Right cardiac atrium (tissue), 5 donors: ENCODE measurements at regions of chr7 and their contacts with region 1.

Region 1: GRCh38 chr7:26667500-26668133 is 196.8 kb downstream of the SKAP2 start:
- DNase-seq: peak in 1 of 3 donors; percentile 38
- ATAC-seq: peak; percentile 78 to 82
- H3K4me3 ChIP-seq: no peak overlapping the region
- H3K27ac ChIP-seq: no peak overlapping the region
- H3K4me1 ChIP-seq: no peaks in the 10 kb centered on the region
- H3K27me3 ChIP-seq: no peaks in the 10 kb centered on the region

Region 2: DNA sequence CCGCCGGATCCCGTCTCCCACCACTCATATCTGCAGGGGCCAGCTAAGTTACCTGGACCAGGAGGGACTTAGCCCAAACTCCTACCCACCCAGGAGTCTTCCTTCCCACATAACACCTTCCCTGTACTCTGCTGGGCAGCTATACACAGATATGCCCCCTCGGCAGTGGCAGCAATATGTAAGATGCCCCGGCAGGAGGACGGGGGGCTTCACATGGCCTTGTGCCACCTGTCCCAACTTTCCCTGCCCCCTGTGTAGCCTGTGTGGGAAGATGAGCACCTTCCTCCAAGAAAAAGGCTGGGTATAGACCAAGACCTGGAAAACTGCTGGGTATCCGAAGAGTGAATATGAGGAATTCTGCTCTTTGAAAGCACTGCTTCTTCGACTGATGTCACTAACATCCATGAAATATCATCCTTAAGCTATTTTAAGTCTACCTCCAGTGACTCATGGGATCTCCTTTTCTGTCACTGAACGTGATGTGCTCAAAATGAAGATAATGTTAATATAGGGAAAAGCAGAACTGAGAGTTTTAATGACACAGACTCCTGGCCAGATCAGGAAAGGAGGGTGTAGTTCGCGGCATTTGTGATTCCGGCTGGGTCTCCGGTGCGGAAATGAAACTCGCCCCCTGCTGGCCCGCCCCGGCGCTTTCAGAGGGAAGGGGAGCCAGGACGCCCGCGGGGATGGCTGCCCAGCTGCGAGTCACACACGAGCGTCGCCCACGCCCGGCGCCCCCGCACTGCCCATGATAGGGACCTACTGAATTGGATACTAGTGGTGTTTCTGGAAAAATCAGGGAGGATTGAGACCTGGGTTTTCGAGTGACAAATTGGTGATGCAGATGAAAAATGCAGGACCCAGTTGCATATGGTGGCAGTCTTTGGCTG is 772.5 kb before region 1 on chr7:
- intact Hi-C with region 1: loop called in 2 of 4 experiments (anchors 10 kb)
- DNase-seq: peak; percentile 73 to 90 (median 89)
- ATAC-seq: peak; percentile 79 to 83
- H3K4me3 ChIP-seq: peak overlapping the region; percentile 8
- H3K27ac ChIP-seq: no peak overlapping the region
- H3K4me1 ChIP-seq: no peaks in the 10 kb centered on the region
- H3K27me3 ChIP-seq: no peaks in the 10 kb centered on the region

Region 3: GRCh38 chr7:26090927-26091519 is 576.6 kb before region 1 on chr7:
- intact Hi-C with region 1: loop called in 1 of 4 experiments (anchors 10 kb)
- DNase-seq: no peak
- ATAC-seq: peak; percentile 68 to 77
- H3K4me3 ChIP-seq: no peak overlapping the region
- H3K27ac ChIP-seq: no peak overlapping the region
- H3K4me1 ChIP-seq: no peaks in the 10 kb centered on the region
- H3K27me3 ChIP-seq: no peaks in the 10 kb centered on the region

Region 4: DNA sequence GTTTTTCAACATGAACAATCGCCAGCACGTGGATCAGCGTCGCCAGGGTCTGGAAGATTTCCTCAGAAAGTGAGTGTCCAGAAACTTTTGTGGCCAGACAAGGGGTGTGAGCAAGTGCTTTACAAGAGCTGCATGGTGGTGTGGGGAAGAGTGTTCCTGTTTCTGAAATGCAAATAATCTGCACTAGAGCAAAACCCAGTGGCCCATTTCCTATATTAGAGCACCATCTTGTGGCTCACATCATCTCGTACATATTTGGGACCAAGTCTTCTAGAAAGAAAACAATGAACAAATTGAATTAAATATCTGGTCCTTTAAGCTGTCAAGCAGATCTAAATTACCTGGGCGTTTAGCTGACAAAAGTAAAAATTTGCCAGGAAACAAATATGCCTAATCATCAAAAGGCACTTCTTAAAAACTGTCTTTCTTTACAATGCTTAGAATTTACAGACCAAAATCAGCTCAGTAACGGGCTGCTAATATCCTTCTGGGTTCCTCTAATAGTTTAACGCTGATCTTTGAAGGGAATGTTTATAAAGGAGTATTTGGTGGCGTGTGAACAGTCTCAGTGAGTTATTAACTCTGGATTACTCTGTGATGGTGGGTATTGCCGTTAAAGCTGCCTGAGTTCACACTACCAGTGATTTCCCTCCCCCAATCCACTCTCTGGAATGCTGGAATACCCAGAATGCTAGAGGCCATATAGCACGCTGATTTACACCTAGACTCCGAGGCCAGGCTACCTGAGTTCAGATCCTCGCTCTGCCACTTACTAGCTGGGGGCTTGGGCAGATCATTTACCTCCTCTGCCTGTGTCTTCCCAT is 302.3 kb before region 1 on chr7:
- intact Hi-C with region 1: loop called (anchors 2 to 5 kb)
- DNase-seq: no peak
- ATAC-seq: peak; percentile 84 to 86
- H3K4me3 ChIP-seq: no peak overlapping the region
- H3K27ac ChIP-seq: no peak overlapping the region
- H3K4me1 ChIP-seq: no peaks in the 10 kb centered on the region
- H3K27me3 ChIP-seq: no peaks in the 10 kb centered on the region

Region 5: GRCh38 chr7:26388256-26388655 is 279.4 kb before region 1 on chr7:
- intact Hi-C with region 1: loop called in 1 of 4 experiments (anchors 5 kb)
- DNase-seq: no peak
- ATAC-seq: no peak
- H3K4me3 ChIP-seq: no peak overlapping the region
- H3K27ac ChIP-seq: no peak overlapping the region
- H3K4me1 ChIP-seq: no peaks in the 10 kb centered on the region
- H3K27me3 ChIP-seq: no peaks in the 10 kb centered on the region

Region 6: DNA sequence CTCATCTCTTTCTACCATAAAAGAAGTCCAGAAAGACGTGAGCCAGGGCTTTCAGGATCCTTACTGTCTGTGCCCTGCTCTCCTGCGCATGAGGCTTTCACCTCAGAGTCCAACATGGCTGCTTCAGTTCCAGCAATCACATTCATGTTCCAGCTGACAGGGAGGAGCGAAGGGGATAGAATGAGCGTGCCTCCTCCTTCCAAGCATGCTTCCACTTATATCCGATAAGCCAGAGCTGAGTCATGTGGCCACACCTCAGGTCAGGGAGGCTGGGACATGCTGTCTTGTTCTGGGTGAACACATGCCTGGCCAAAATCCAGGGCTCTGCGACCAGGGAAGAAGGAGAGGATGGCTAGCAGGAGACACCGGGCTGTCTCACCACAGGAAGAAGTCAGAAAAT is 51.4 kb before region 1 on chr7:
- intact Hi-C with region 1: no loop called
- DNase-seq: peak in 1 of 3 donors; percentile 60
- ATAC-seq: no peak
- H3K4me3 ChIP-seq: no peak overlapping the region
- H3K27ac ChIP-seq: no peak overlapping the region
- H3K4me1 ChIP-seq: peaks cover 4% of the 10 kb centered on the region
- H3K27me3 ChIP-seq: no peaks in the 10 kb centered on the region